Activated CD8-positive, alpha-beta T cell treated with anti-CD3 and anti-CD28 coated beads for 36 hours (primary cell): ENCODE measurements at regions of chr10 and their contacts with region 1.

Region 1: DNA sequence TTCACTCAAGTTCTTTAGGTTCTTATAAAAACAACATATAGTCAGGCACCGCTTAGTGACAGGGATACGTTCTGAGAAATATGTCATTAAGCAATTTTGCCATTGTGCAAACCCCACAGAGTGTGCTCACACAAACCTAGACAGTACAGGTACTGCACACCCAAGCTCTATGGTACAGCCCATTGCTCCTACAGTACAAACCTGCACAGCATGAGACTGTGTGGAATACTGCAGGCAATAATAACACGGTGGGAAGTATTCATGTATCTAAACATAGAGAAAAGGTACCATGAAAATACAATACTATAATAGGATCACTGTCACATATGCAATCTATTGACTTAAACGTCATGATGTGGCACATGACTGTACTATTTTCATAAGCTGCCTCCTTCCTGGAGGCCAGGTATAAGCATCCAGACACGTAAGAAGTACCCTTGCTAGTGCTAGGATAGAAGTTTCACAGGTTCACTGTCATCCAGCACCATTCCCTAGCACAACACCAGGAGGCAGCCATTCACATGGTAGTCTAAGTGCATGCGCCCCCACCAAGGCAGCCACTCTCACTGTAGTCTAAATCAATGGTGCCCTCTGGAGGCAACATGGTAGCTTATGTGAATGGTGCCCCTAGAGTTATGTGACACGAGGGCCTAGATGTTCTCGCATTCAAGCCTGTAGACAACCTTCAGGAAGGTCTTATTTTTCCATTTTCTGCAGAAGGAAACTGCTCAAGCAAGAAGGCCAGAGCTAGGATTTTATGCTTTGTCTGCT is 98.5 kb downstream of the ARHGAP22 start:
- DNase-seq: peak; percentile 45
- ATAC-seq: no peak
- H3K4me3 Mint-ChIP-seq: no peak overlapping the region
- H3K27ac Mint-ChIP-seq: no peak overlapping the region
- H3K4me1 Mint-ChIP-seq: no peaks in the 10 kb centered on the region
- H3K27me3 Mint-ChIP-seq: peaks cover 1% of the 10 kb centered on the region
- CTCF ChIP-seq: peak; percentile 32

Region 2: GRCh38 chr10:48363617-48364355 is 142.5 kb before region 1 on chr10:
- CTCF ChIA-PET with region 1: interaction called, 15 read pairs
- POLR2A ChIA-PET with region 1: no interaction called
- intact Hi-C with region 1: loop called (anchors 10 kb)
- DNase-seq: peak; percentile 41
- ATAC-seq: no peak
- H3K4me3 Mint-ChIP-seq: no peak overlapping the region
- H3K27ac Mint-ChIP-seq: no peak overlapping the region
- H3K4me1 Mint-ChIP-seq: peaks cover 21% of the 10 kb centered on the region
- H3K27me3 Mint-ChIP-seq: no peaks in the 10 kb centered on the region
- CTCF ChIP-seq: peak; percentile 82